Ascending aorta (tissue), 2 donors: ENCODE measurements at regions of chr21 and their contacts with region 1.

Region 1: GRCh38 chr21:41121785-41122421 is 46.1 kb upstream of the BACE2 start:
- DNase-seq: peak; percentile 38 to 94
- H3K4me3 ChIP-seq: no peak overlapping the region
- H3K27ac ChIP-seq: no peak overlapping the region
- H3K4me1 ChIP-seq: peaks cover 0 to 10% of the 10 kb centered on the region in 2 donors
- H3K27me3 ChIP-seq: no peaks in the 10 kb centered on the region
- CTCF ChIP-seq: peak; percentile 77 to 94 (median 90)

Region 2: GRCh38 chr21:41133896-41134522 is 12.1 kb after region 1 on chr21:
- intact Hi-C with region 1: loop called (anchors 1 kb)
- DNase-seq: no peak
- H3K4me3 ChIP-seq: no peak overlapping the region
- H3K27ac ChIP-seq: no peak overlapping the region
- H3K4me1 ChIP-seq: no peaks in the 10 kb centered on the region
- H3K27me3 ChIP-seq: no peaks in the 10 kb centered on the region
- CTCF ChIP-seq: peak in 2 of 3 experiments; percentile 27 to 40

Region 3: DNA sequence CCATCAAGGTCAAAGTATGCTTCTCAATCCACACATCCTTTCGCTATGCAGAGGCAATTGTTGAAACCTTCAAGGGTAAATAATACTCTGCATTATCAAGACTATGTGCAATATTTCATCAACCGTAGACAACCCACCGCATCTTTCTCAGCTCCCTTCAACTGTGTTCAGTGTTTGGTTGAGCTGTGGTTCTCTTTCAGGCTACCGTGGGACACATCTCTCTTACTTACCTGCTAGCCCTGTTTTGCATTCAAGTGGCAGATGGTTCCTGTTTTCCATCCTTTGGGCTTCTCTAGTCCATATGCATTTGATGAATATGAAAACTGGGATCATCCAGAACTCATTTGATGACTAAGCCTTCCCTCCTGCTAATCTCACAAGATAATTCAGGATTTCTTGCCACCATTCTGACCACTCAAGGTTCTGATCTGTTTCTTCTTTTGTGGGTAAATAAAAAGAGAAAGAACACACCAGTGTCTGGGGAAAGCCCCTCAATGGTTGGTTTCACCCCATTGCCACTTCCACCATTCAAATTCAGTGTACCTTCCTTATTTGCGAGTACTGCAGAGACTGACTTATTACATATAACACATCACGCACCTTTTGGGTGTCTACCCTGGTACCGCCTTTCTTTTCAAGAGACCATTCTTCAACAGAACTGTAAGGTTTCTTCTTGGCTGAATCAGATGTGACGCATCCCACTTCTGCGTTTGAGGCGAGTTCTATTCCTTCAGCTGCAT is 107.8 kb after region 1 on chr21:
- intact Hi-C with region 1: loop called (anchors 5 kb)
- DNase-seq: no peak
- H3K4me3 ChIP-seq: no peak overlapping the region
- H3K27ac ChIP-seq: no peak overlapping the region
- H3K4me1 ChIP-seq: peaks cover 0 to 6% of the 10 kb centered on the region in 2 donors
- H3K27me3 ChIP-seq: no peaks in the 10 kb centered on the region
- CTCF ChIP-seq: no peak

Region 4: GRCh38 chr21:41419911-41420862 is 298.3 kb after region 1 on chr21:
- intact Hi-C with region 1: loop called (anchors 5 kb)
- DNase-seq: peak; percentile 53 to 93
- H3K4me3 ChIP-seq: peak overlapping the region; percentile 79 to 82
- H3K27ac ChIP-seq: peak overlapping the region; percentile 83 to 88
- H3K4me1 ChIP-seq: no peaks in the 10 kb centered on the region
- H3K27me3 ChIP-seq: no peaks in the 10 kb centered on the region
- CTCF ChIP-seq: no peak

Region 5: GRCh38 chr21:41777951-41778874 is 656.3 kb after region 1 on chr21:
- intact Hi-C with region 1: loop called (anchors 5 kb)
- DNase-seq: peak; percentile 59 to 95
- H3K4me3 ChIP-seq: peak overlapping the region; percentile 37 to 51
- H3K27ac ChIP-seq: peak overlapping the region; percentile 64 to 79
- H3K4me1 ChIP-seq: peaks cover 0 to 3% of the 10 kb centered on the region in 2 donors
- H3K27me3 ChIP-seq: no peaks in the 10 kb centered on the region
- CTCF ChIP-seq: peak; percentile 89 to 97 (median 95)